ENCODE measurements at regions of chr13 and their contacts with region 1.

Region 1: GRCh38 chr13:44577236-44578066 is 1.3 kb upstream of the TSC22D1 start:
- DNase-seq: peak; percentile 96
- H3K4me3 Mint-ChIP-seq: peak overlapping the region; percentile 93
- H3K27ac Mint-ChIP-seq: peak overlapping the region; percentile 85
- H3K4me1 Mint-ChIP-seq: peaks cover 39% of the 10 kb centered on the region
- H3K27me3 Mint-ChIP-seq: peaks cover 2% of the 10 kb centered on the region

Region 2: GRCh38 chr13:44141725-44142539 is 435.5 kb before region 1 on chr13:
- CTCF ChIA-PET with region 1: no interaction called
- POLR2A ChIA-PET with region 1: no interaction called
- intact Hi-C with region 1: loop called (anchors 5 kb)
- DNase-seq: peak; percentile 96
- H3K4me3 Mint-ChIP-seq: peak overlapping the region; percentile 85
- H3K27ac Mint-ChIP-seq: peak overlapping the region; percentile 75
- H3K4me1 Mint-ChIP-seq: peaks cover 12% of the 10 kb centered on the region
- H3K27me3 Mint-ChIP-seq: peaks cover 2% of the 10 kb centered on the region

Region 3: DNA sequence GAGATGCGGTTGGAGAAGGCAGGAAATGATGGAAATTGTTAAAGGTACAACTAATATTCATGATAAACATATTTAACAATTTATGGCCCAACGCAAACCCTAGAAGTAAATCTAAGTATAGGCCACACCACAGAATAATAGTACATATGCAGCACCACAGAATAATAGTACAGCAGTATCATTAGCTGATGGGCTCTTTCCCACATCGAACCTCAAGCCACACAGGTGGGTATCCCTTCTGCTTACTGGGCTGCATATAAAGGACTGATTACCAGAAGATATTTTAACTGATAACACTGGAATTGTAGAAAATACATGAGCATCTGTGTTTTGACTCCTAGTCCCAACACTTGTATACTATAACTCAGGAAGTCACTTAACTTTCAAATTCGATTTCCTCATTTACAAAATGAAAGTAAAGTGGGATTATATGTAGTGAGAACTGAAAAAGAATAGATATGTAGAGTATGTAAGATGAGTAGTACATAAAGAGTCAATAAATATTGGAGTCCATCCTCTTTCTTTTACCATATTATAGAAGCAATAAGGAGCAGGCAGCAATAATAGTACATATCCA is 92.8 kb before region 1 on chr13:
- CTCF ChIA-PET with region 1: interaction called, 14 read pairs
- POLR2A ChIA-PET with region 1: no interaction called
- intact Hi-C with region 1: loop called (anchors 2 kb)
- DNase-seq: no peak
- H3K4me3 Mint-ChIP-seq: peak overlapping the region; percentile 46
- H3K27ac Mint-ChIP-seq: peak overlapping the region; percentile 13
- H3K4me1 Mint-ChIP-seq: peaks cover 13% of the 10 kb centered on the region
- H3K27me3 Mint-ChIP-seq: no peaks in the 10 kb centered on the region

Region 4: GRCh38 chr13:44629465-44630183 is 52.2 kb after region 1 on chr13:
- CTCF ChIA-PET with region 1: no interaction called
- POLR2A ChIA-PET with region 1: no interaction called
- intact Hi-C with region 1: no loop called
- DNase-seq: no peak
- H3K4me3 Mint-ChIP-seq: no peak overlapping the region
- H3K27ac Mint-ChIP-seq: no peak overlapping the region
- H3K4me1 Mint-ChIP-seq: no peaks in the 10 kb centered on the region
- H3K27me3 Mint-ChIP-seq: peaks cover 15% of the 10 kb centered on the region

Region 5: DNA sequence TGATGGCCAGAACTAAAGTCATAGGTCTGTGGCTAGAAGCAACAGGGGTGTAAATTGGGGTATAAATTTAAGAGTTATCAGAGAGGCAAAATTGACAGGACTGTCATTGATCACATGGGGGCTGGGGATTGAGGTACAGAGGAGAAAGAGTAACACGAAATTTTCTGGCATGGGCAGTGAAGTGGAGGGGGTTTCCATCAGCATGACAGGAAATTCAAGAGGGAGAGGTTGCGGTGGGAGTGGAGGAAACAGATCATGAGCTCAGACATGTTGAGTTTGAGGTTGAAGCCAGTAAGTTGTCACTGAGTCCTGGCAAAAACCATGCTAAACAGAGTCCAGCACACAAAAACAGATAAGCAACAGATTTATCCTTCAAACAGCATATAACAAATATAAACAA is 190.8 kb after region 1 on chr13:
- CTCF ChIA-PET with region 1: no interaction called
- POLR2A ChIA-PET with region 1: no interaction called
- intact Hi-C with region 1: loop called (anchors 5 kb)
- DNase-seq: peak; percentile 65
- H3K4me3 Mint-ChIP-seq: no peak overlapping the region
- H3K27ac Mint-ChIP-seq: peak overlapping the region; percentile 51
- H3K4me1 Mint-ChIP-seq: peaks cover 27% of the 10 kb centered on the region
- H3K27me3 Mint-ChIP-seq: no peaks in the 10 kb centered on the region

Region 6: GRCh38 chr13:44988973-44989817 is 411.7 kb after region 1 on chr13 and contains the starts of genes GPALPP1 and NUFIP1:
- CTCF ChIA-PET with region 1: no interaction called
- POLR2A ChIA-PET with region 1: no interaction called
- intact Hi-C with region 1: loop called (anchors 1 kb)
- DNase-seq: peak; percentile 96
- H3K4me3 Mint-ChIP-seq: peak within 1 kb of the TSS; percentile 97
- H3K27ac Mint-ChIP-seq: peak within 1 kb of the TSS; percentile 92
- H3K4me1 Mint-ChIP-seq: peaks cover 58% of the 10 kb centered on the region
- H3K27me3 Mint-ChIP-seq: no peaks in the 10 kb centered on the region
- total RNA-seq, gene GPALPP1: 30.1 to 32.7 TPM
- total RNA-seq, gene NUFIP1: 9.3 to 9.5 TPM

Region 7: GRCh38 chr13:45340926-45341750 is 763.7 kb after region 1 on chr13 and contains the start of gene TPT1:
- CTCF ChIA-PET with region 1: no interaction called
- POLR2A ChIA-PET with region 1: no interaction called
- intact Hi-C with region 1: loop called (anchors 1 kb)
- DNase-seq: peak; percentile 100
- H3K4me3 Mint-ChIP-seq: peak within 1 kb of the TSS; percentile 94
- H3K27ac Mint-ChIP-seq: peak within 1 kb of the TSS; percentile 99
- H3K4me1 Mint-ChIP-seq: peaks cover 45% of the 10 kb centered on the region
- H3K27me3 Mint-ChIP-seq: no peaks in the 10 kb centered on the region
- total RNA-seq, gene TPT1: 3,227 to 3,264 TPM